ENCODE measurements at regions of chr18 and their contacts with region 1.

Region 1: GRCh38 chr18:58135701-58136331 is 91.8 kb downstream of the NEDD4L start:
- DNase-seq: no peak
- H3K4me3 ChIP-seq: no peak overlapping the region
- H3K27ac ChIP-seq: no peak overlapping the region
- H3K4me1 ChIP-seq: peaks cover 0 to 15% (median 8%) of the 10 kb centered on the region in 6 donors
- H3K27me3 ChIP-seq: no peaks in the 10 kb centered on the region
- CTCF ChIP-seq: peak; percentile 49 to 90 (median 77)
- POLR2A ChIP-seq: no peak

Region 2: DNA sequence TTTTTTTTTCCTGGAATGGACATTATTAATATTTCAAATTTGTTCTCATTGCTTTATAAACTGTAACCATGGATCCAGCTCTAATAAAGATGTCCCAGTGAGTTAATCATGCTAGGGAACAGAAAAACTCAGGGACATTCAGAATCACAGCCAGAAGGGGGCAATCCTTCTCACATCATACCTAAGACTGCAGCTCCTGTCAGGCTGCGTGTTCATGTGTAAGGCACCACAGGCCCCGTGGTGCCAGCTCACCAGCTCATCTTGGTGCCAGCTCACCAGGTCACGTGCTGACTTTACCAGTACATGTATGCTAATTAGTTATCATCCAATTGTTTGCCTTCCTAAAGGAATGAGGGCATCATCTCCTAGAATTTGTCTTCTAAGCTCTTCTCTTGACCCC is 176.5 kb before region 1 on chr18:
- intact Hi-C with region 1: loop called (anchors 10 kb)
- DNase-seq: no peak
- H3K4me3 ChIP-seq: no peak overlapping the region
- H3K27ac ChIP-seq: no peak overlapping the region
- H3K4me1 ChIP-seq: no peaks in the 10 kb centered on the region
- H3K27me3 ChIP-seq: peaks cover 0 to 6% (median 0%) of the 10 kb centered on the region in 7 donors
- CTCF ChIP-seq: peak in 6 of 11 experiments; percentile 27 to 44 (median 32)
- POLR2A ChIP-seq: no peak

Measured in spleen (tissue), 13 donors.